ENCODE measurements at regions of chr18 and their contacts with region 1.

Region 1: GRCh38 chr18:31722369-31722957 is 38.1 kb upstream of the B4GALT6 start:
- DNase-seq: peak; percentile 87
- ATAC-seq: peak; percentile 89

Region 2: DNA sequence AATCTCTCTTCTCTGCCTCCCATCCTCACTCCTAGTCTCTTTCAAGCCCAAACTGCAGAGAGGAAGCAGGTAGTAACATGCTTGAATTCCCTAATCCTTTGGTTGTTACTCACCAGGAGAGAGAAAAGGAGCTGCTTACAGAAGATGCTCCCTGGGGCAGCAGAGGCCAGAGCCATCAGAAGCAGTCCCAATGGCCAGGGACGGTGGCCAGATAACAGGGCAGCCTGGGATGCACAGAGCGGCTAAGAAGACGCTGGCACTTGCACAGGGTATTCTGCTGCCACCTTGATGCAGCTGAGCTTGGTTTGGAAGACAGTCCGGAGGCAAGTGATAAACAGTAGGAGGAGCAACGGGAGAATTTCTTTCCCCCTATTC is 560.1 kb before region 1 on chr18:
- intact Hi-C with region 1: no loop called
- DNase-seq: no peak
- ATAC-seq: no peak

Region 3: GRCh38 chr18:31563778-31564177 is 158.7 kb before region 1 on chr18:
- intact Hi-C with region 1: loop called (anchors 10 kb)
- DNase-seq: no peak
- ATAC-seq: no peak